CD4-positive, alpha-beta memory T cell (primary cell): ENCODE measurements at regions of chr10 and their contacts with region 1.

Region 1: GRCh38 chr10:33008499-33009243 is 50.6 kb upstream of the ITGB1 start:
- DNase-seq: peak; percentile 65 to 79 (median 68)
- H3K4me3 ChIP-seq: peak overlapping the region; percentile 12 to 25
- H3K4me3 Mint-ChIP-seq: peak overlapping the region; percentile 63 to 90 (median 81)
- H3K27ac ChIP-seq: peak overlapping the region; percentile 57
- H3K27ac Mint-ChIP-seq: peak overlapping the region; percentile 92 to 99 (median 93)
- H3K4me1 ChIP-seq: peaks cover 55% of the 10 kb centered on the region
- H3K4me1 Mint-ChIP-seq: peaks cover 39 to 72% (median 54%) of the 10 kb centered on the region in 4 donors
- H3K27me3 ChIP-seq: no peaks in the 10 kb centered on the region
- H3K27me3 Mint-ChIP-seq: no peaks in the 10 kb centered on the region

Region 2: DNA sequence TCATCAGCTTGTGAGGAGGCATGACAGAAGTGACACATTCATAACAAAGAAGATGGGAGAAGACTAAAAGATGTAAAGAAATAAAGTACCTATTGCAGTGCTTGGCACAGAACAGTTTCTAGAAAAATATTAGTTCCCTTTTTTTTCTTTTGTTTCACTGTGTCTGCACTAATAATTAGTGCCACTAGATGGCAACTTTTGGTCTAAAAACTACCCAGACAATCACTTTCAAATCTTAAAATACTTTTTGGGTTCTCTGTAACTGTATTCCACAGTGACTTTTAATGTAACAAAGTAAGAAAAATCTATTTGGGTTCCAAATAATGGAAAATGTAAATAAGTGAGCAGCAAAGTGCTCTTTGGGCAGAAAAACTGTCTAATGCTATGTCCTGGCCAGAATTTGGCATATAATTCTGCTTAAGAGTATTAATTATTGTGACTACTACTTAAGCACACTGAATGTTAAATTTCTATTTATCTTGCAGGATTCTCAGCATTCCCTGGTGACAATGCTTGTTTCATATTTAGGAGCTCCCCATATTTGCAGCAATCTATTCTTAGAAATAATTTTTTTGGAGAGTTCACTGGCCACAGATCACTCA is 817.7 kb before region 1 on chr10:
- CTCF ChIA-PET with region 1: interaction called, 4 read pairs
- POLR2A ChIA-PET with region 1: no interaction called
- intact Hi-C with region 1: loop called (anchors 2 kb)
- DNase-seq: peak in 4 of 5 donors; percentile 31 to 44 (median 40)
- H3K4me3 ChIP-seq: no peak overlapping the region
- H3K4me3 Mint-ChIP-seq: no peak overlapping the region
- H3K27ac ChIP-seq: no peak overlapping the region
- H3K27ac Mint-ChIP-seq: peak overlapping the region in 4 of 7 donors; percentile 5 to 59 (median 50)
- H3K4me1 ChIP-seq: no peaks in the 10 kb centered on the region
- H3K4me1 Mint-ChIP-seq: peaks cover 0 to 6% (median 3%) of the 10 kb centered on the region in 4 donors
- H3K27me3 ChIP-seq: no peaks in the 10 kb centered on the region
- H3K27me3 Mint-ChIP-seq: no peaks in the 10 kb centered on the region

Region 3: DNA sequence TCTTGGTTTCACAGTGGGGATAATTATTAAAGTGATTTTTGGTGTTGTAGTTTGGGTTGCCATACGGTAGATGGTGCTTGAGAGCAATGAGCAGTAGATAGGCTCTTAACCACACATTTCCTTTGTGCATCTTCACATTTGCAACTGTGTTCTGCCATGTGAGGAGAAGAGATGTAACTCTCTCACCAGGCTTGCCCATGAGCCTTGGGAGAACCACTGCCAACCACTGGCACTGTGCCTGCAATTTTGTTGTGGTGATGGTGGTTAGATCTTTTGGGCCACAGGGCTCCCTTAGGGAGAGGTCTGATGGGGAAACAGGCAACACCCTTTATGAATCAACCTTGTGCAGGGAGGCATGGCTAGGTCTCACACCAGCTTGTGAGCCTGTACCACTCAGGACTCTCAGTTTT is 358.4 kb before region 1 on chr10:
- CTCF ChIA-PET with region 1: no interaction called
- POLR2A ChIA-PET with region 1: no interaction called
- intact Hi-C with region 1: loop called (anchors 5 kb)
- DNase-seq: peak in 4 of 5 donors; percentile 19 to 41 (median 33)
- H3K4me3 ChIP-seq: no peak overlapping the region
- H3K4me3 Mint-ChIP-seq: peak overlapping the region in 3 of 8 donors; percentile 7 to 10 (median 9)
- H3K27ac ChIP-seq: no peak overlapping the region
- H3K27ac Mint-ChIP-seq: peak overlapping the region in 4 of 7 donors; percentile 1 to 89 (median 25)
- H3K4me1 ChIP-seq: peaks cover 12% of the 10 kb centered on the region
- H3K4me1 Mint-ChIP-seq: peaks cover 8 to 24% (median 12%) of the 10 kb centered on the region in 4 donors
- H3K27me3 ChIP-seq: no peaks in the 10 kb centered on the region
- H3K27me3 Mint-ChIP-seq: no peaks in the 10 kb centered on the region

Region 4: GRCh38 chr10:32980558-32981468 is 27.9 kb before region 1 on chr10:
- CTCF ChIA-PET with region 1: interaction called, 21 read pairs
- POLR2A ChIA-PET with region 1: interaction called, 29 read pairs
- intact Hi-C with region 1: loop called (anchors 2 kb)
- DNase-seq: peak; percentile 77 to 94 (median 80)
- H3K4me3 ChIP-seq: peak overlapping the region; percentile 30 to 87
- H3K4me3 Mint-ChIP-seq: peak overlapping the region; percentile 93 to 98 (median 95)
- H3K27ac ChIP-seq: peak overlapping the region; percentile 84
- H3K27ac Mint-ChIP-seq: peak overlapping the region; percentile 92 to 99 (median 98)
- H3K4me1 ChIP-seq: peaks cover 40% of the 10 kb centered on the region
- H3K4me1 Mint-ChIP-seq: peaks cover 25 to 39% (median 34%) of the 10 kb centered on the region in 4 donors
- H3K27me3 ChIP-seq: no peaks in the 10 kb centered on the region
- H3K27me3 Mint-ChIP-seq: no peaks in the 10 kb centered on the region

Region 5: GRCh38 chr10:33095867-33096815 is 87.5 kb after region 1 on chr10:
- CTCF ChIA-PET with region 1: interaction called, 5 read pairs
- POLR2A ChIA-PET with region 1: interaction called, 23 read pairs
- intact Hi-C with region 1: no loop called
- DNase-seq: no peak
- H3K4me3 ChIP-seq: no peak overlapping the region
- H3K4me3 Mint-ChIP-seq: peak overlapping the region in 4 of 8 donors; percentile 7 to 49 (median 23)
- H3K27ac ChIP-seq: no peak overlapping the region
- H3K27ac Mint-ChIP-seq: peak overlapping the region in 4 of 7 donors; percentile 12 to 50 (median 27)
- H3K4me1 ChIP-seq: peaks cover 48% of the 10 kb centered on the region
- H3K4me1 Mint-ChIP-seq: peaks cover 48 to 80% (median 67%) of the 10 kb centered on the region in 4 donors
- H3K27me3 ChIP-seq: no peaks in the 10 kb centered on the region
- H3K27me3 Mint-ChIP-seq: no peaks in the 10 kb centered on the region

Region 6: GRCh38 chr10:33125522-33126517 is 117.1 kb after region 1 on chr10:
- CTCF ChIA-PET with region 1: interaction called, 61 read pairs
- POLR2A ChIA-PET with region 1: interaction called, 61 read pairs
- intact Hi-C with region 1: no loop called
- DNase-seq: peak; percentile 58 to 72 (median 66)
- H3K4me3 ChIP-seq: no peak overlapping the region
- H3K4me3 Mint-ChIP-seq: peak overlapping the region; percentile 37 to 81 (median 65)
- H3K27ac ChIP-seq: peak overlapping the region; percentile 72
- H3K27ac Mint-ChIP-seq: peak overlapping the region; percentile 91 to 98 (median 97)
- H3K4me1 ChIP-seq: peaks cover 93% of the 10 kb centered on the region
- H3K4me1 Mint-ChIP-seq: peaks cover 61 to 98% (median 84%) of the 10 kb centered on the region in 4 donors
- H3K27me3 ChIP-seq: no peaks in the 10 kb centered on the region
- H3K27me3 Mint-ChIP-seq: no peaks in the 10 kb centered on the region